PC-9 (cell line): ENCODE measurements at regions of chr6 and their contacts with region 1.

Region 1: GRCh38 chr6:103534107-103534506 is 1325.6 kb downstream of the HACE1 start:
- DNase-seq: no peak
- H3K4me3 ChIP-seq: no peak overlapping the region
- H3K27ac ChIP-seq: no peak overlapping the region
- H3K4me1 ChIP-seq: no peaks in the 10 kb centered on the region
- H3K27me3 ChIP-seq: no peaks in the 10 kb centered on the region
- CTCF ChIP-seq: no peak

Region 2: DNA sequence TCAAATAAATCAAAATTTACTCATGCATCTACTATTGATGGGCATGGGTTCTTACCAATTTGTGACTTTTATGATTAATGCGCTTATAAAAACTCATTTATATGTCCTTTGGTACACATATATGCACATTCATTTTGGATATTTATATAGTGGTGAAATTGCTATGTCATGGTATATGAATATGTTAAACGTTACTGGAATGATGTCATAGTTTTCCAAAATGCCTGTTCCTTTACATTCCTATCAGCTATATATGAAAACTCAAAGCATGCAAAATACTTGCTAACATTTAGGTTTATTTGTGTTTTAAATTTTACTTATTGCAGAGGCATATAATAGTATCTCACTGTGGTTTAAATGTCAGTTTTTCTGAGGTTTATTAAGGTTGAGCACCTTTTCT is 77.5 kb before region 1 on chr6:
- CTCF ChIA-PET with region 1: no interaction called
- POLR2A ChIA-PET with region 1: no interaction called
- intact Hi-C with region 1: no loop called
- DNase-seq: no peak
- H3K4me3 ChIP-seq: no peak overlapping the region
- H3K27ac ChIP-seq: no peak overlapping the region
- H3K4me1 ChIP-seq: no peaks in the 10 kb centered on the region
- H3K27me3 ChIP-seq: no peaks in the 10 kb centered on the region
- CTCF ChIP-seq: no peak

Region 3: DNA sequence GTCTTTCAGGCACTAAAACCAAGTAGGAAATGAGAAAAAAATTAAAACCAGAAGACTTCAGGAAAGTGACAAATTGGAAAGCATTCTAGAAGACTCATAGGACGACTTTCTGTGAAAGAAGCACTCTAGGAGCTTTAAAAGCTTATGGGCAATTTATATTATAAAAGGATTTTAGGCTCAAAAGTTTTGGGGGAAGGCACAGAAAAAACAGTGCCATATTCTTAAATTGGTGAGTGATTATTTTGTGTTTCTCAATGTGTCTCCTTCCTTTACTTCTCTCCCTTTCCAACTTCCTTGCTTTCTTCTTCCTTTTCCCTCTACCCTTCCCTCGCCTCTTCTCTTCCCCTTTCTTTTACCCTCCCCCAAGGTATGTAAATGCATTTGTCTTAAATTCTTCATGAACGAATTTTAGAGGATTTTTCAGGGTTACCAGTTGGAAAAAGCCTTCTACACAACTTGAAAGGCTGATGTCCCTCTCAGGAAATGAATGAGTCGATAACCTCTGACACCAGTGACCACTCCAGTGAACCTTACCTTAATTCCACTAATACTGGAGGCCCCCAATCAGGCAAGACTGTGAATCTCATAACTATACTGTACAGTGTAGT is 1420.2 kb after region 1 on chr6:
- CTCF ChIA-PET with region 1: no interaction called
- POLR2A ChIA-PET with region 1: interaction called, 10 read pairs
- intact Hi-C with region 1: no loop called
- DNase-seq: no peak
- H3K4me3 ChIP-seq: no peak overlapping the region
- H3K27ac ChIP-seq: no peak overlapping the region
- H3K4me1 ChIP-seq: no peaks in the 10 kb centered on the region
- H3K27me3 ChIP-seq: no peaks in the 10 kb centered on the region
- CTCF ChIP-seq: no peak